Mucosa of descending colon (tissue), 3 donors: ENCODE measurements at regions of chr12 and their contacts with region 1.

Region 1: GRCh38 chr12:6383572-6384498 is at the start of gene LTBR:
- DNase-seq: peak; percentile 94 to 97 (median 97)
- ATAC-seq: peak; percentile 96
- H3K4me3 ChIP-seq: peak within 1 kb of the TSS; percentile 33
- H3K4me1 ChIP-seq: peaks cover 19% of the 10 kb centered on the region
- CTCF ChIP-seq: no peak
- total RNA-seq, gene LTBR: 114 to 142 (median 135) TPM

Region 2: GRCh38 chr12:6335451-6336078 is 48.3 kb before region 1 on chr12:
- intact Hi-C with region 1: loop called (anchors 5 to 10 kb)
- DNase-seq: peak; percentile 82 to 92 (median 87)
- ATAC-seq: peak; percentile 48
- H3K4me3 ChIP-seq: no peak overlapping the region
- H3K4me1 ChIP-seq: peaks cover 74% of the 10 kb centered on the region
- CTCF ChIP-seq: peak; percentile 24